ENCODE measurements at regions of chr16 and their contacts with region 1.

Region 1: DNA sequence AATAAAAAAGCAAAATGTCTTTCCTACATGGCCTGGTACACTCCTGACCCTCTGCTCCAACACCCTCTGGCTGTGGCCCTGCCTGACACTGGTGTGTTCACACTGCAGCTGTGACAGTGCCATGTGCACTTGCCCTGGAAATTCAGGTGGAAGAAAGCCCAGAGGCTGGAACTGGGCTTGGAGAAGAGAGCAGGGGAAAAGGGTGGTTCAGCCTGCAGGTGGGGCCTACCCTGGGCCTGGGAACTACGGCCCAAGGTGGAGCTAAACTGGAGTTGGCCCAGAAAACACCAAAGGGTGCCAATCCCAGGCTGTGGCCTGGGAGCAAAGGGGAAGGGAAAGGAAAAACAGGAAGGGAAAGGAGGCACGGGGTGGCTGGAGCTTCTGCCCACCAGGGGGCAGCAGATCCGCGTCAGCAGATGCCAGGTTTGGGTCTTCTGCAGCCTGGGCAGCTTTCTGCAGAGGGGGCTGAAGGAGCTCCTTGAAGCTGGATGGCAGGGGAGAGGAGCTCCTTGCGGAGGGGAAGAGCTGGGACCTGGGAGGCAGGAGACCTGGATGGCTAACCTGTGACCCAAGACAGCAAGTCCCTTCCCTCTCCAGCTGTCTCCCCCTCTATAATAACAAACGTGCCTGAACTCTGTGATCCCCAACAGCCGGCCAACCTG is 15.4 kb upstream of the CTCF start:
- DNase-seq: peak; percentile 80
- CTCF ChIP-seq: peak; percentile 96

Region 2: GRCh38 chr16:67146523-67147357 is 400.2 kb before region 1 on chr16:
- CTCF ChIA-PET with region 1: no interaction called
- POLR2A ChIA-PET with region 1: no interaction called
- DNase-seq: no peak
- CTCF ChIP-seq: peak; percentile 19

Region 3: DNA sequence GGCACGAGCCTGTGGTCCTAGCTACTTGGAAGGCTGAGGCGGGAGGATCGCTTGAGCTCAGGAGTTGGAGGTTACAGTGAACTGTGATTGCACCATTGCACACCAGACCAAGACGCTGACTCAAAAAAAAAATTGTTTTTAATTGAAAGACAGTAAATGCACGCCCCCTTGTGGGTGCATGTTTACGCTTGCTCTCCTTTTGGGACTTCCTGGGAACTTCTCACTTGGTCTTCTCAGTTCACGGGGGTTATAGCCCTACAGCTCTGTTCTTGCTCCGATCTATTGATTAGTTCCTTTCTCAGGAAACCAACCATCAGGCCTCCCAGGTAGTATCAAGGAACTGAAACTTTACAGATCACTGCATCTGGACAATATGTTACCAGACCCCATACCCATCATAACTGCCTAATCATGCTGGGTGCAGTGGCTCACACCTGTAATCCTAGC is 32.5 kb before region 1 on chr16:
- CTCF ChIA-PET with region 1: interaction called, 14 read pairs
- POLR2A ChIA-PET with region 1: no interaction called
- DNase-seq: peak; percentile 79
- CTCF ChIP-seq: peak; percentile 61

Region 4: DNA sequence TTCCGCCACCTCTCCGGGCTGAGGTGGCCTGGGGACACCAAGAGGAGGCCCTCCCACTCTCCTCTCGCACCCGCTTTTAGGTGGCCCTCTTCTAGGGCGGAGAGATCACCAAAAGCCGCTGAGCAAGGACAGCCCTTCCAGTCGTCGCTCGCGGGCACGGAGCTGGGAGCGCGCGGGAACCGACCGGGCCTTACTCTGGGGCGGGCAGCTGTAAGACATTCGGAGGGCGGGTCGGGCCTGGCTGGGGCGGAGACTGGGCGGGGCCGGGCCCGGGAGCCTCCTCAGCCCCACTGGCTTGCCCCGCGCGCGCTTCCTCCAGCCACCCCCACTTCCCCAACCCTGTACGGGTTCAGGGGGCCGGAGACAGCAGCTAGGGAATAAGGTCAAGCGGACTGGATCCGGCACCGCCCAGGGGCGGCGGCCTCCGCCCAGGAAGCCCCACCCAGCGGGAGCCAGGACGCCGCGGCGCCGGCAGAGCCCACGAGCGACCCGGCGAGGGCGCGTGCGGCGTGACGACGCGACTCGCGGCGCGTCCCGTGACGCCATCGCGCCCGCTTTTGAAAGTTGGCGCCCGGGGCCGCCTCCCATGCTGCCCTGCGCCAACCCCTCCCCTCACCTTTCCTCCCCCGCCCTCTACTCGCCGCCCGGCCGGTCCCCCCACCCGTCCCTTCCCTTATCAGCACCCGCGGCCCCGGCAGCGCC is 15.1 kb after region 1 on chr16:
- CTCF ChIA-PET with region 1: interaction called, 206 read pairs
- POLR2A ChIA-PET with region 1: interaction called, 9 read pairs
- DNase-seq: peak; percentile 96
- CTCF ChIP-seq: no peak

Region 5: GRCh38 chr16:67595033-67595355 is 48.1 kb after region 1 on chr16:
- CTCF ChIA-PET with region 1: interaction called, 15 read pairs
- POLR2A ChIA-PET with region 1: no interaction called
- DNase-seq: no peak
- CTCF ChIP-seq: no peak

Region 6: GRCh38 chr16:67641779-67642708 is 95.2 kb after region 1 on chr16:
- CTCF ChIA-PET with region 1: interaction called, 157 read pairs
- POLR2A ChIA-PET with region 1: interaction called, 7 read pairs
- DNase-seq: no peak
- CTCF ChIP-seq: no peak

Region 7: DNA sequence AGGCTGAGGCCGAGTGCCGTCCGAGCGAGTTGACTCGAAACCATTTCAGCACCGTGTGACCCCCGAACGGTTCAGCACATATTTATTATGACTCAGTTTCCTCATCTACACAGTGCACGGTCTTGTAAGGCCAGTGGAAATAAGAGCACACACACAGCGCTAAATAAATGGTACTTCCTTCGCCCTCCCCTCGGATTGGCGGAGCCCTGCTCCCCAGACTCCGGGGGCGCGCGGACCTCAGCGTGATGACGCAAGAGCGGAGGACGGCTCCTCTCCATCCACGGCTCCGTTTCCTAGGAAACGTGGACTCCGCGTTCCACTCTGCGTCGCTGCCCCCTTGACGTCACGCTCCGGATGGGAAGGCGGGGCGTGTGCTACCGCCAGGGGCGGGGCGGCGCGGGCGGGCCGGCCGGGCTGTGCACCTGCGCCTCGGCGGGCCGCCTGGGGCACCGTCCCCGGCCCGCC is 113.7 kb after region 1 on chr16 and contains the start of gene PARD6A:
- CTCF ChIA-PET with region 1: interaction called, 123 read pairs
- POLR2A ChIA-PET with region 1: no interaction called
- DNase-seq: peak; percentile 100
- CTCF ChIP-seq: no peak